Vagina (tissue), 2 donors: ENCODE measurements at regions of chr7 and their contacts with region 1.

Region 1: GRCh38 chr7:82631998-82632397 is 188.4 kb upstream of the CACNA2D1 start:
- DNase-seq: no peak
- H3K4me3 ChIP-seq: no peak overlapping the region
- H3K27ac ChIP-seq: no peak overlapping the region
- H3K4me1 ChIP-seq: no peaks in the 10 kb centered on the region
- H3K27me3 ChIP-seq: no peaks in the 10 kb centered on the region
- CTCF ChIP-seq: no peak
- POLR2A ChIP-seq: no peak

Region 2: GRCh38 chr7:82714883-82715282 is 82.9 kb after region 1 on chr7:
- intact Hi-C with region 1: no loop called
- DNase-seq: no peak
- H3K4me3 ChIP-seq: no peak overlapping the region
- H3K27ac ChIP-seq: no peak overlapping the region
- H3K4me1 ChIP-seq: no peaks in the 10 kb centered on the region
- H3K27me3 ChIP-seq: no peaks in the 10 kb centered on the region
- CTCF ChIP-seq: no peak
- POLR2A ChIP-seq: no peak

Region 3: DNA sequence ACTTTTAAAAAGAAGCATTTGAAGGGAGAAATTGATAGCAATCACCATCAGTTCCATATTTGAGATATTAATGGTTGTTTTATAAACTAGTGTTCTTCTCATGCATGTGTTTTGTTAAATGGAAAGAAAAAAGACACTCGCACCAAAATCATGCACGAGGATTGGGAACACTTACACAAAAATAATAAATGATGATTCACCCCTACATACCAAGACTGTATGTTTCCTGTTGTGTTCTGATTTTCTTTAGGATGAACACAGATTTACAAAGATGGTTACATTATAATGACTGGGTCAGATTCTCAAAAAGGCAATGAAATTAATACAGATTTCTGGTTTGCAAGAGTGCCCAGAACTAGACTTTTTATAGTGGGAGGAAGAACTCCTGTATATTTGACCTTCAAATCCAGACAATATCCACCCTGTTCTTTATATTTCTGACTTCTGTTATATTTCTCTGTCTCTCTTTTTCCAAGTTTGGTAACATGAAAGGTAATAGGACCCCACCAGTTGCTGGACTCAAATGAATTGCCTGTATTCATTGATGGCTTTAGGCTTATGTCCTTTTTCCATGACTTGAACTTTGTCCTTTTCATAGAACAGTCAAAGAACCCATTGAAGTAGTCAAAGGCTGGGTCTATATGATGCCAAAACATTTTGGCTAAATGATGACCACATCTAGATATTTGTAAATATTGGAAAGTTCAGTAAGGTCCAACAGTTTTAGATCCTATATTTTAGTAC is 1508.2 kb after region 1 on chr7:
- intact Hi-C with region 1: loop called (anchors 5 kb)
- DNase-seq: no peak
- H3K4me3 ChIP-seq: no peak overlapping the region
- H3K27ac ChIP-seq: no peak overlapping the region
- H3K4me1 ChIP-seq: no peaks in the 10 kb centered on the region
- H3K27me3 ChIP-seq: no peaks in the 10 kb centered on the region
- CTCF ChIP-seq: no peak
- POLR2A ChIP-seq: no peak